Caco-2 (cell line): ENCODE measurements at regions of chr2 and their contacts with region 1.

Region 1: GRCh38 chr2:188291617-188292347 is at the start of gene GULP1:
- DNase-seq: peak; percentile 82 to 85
- H3K4me3 ChIP-seq: peak within 1 kb of the TSS; percentile 92
- H3K4me3 Mint-ChIP-seq: peak within 1 kb of the TSS; percentile 94
- H3K27ac Mint-ChIP-seq: peak within 1 kb of the TSS; percentile 89
- H3K4me1 ChIP-seq: peaks cover 17% of the 10 kb centered on the region
- H3K4me1 Mint-ChIP-seq: no peaks in the 10 kb centered on the region
- H3K27me3 ChIP-seq: no peaks in the 10 kb centered on the region
- H3K27me3 Mint-ChIP-seq: no peaks in the 10 kb centered on the region
- CTCF ChIP-seq: peak; percentile 75 to 90
- total RNA-seq, gene GULP1: 32.4 and 33.0 TPM in 2 replicates

Region 2: GRCh38 chr2:188303363-188304031 is 11.7 kb after region 1 on chr2:
- CTCF ChIA-PET with region 1: interaction called, 6 read pairs
- POLR2A ChIA-PET with region 1: interaction called, 5 read pairs
- intact Hi-C with region 1: loop called (anchors 1 kb)
- DNase-seq: peak; percentile 60 to 61
- H3K4me3 ChIP-seq: no peak overlapping the region
- H3K4me3 Mint-ChIP-seq: peak overlapping the region; percentile 22
- H3K27ac Mint-ChIP-seq: peak overlapping the region; percentile 41
- H3K4me1 ChIP-seq: peaks cover 31% of the 10 kb centered on the region
- H3K4me1 Mint-ChIP-seq: peaks cover 38% of the 10 kb centered on the region
- H3K27me3 ChIP-seq: no peaks in the 10 kb centered on the region
- H3K27me3 Mint-ChIP-seq: no peaks in the 10 kb centered on the region
- CTCF ChIP-seq: no peak

Region 3: DNA sequence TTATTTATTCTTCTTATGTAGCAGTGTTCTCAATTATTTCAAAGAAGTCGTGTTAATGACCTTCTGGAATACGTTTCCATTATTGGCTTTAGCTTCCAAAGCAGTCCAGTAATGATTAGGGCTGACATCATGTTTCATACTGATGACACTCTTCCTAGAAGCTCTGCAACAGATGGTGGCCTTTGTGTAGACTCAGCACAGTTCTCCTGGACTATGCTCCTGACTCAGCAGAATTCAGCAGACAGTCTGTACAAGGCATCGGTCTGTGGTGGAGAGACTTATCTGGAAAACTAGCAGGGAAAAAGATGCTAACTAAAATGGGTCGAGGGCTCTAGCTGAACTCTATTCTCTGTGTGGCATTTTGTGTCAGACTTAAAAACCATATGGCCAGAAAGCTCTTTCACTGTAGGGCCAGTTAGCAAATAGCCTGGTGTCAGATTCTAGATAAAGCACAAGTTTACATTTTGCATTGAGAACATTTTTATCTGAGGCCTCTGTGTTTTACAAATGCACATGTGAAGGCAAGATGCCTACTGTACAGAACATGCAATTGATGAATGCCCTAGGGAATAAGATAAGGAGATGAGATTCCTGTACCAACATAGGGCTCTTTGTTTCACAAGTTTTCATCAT is 35.0 kb after region 1 on chr2:
- CTCF ChIA-PET with region 1: interaction called, 3 read pairs
- POLR2A ChIA-PET with region 1: interaction called, 5 read pairs
- intact Hi-C with region 1: loop called (anchors 2 kb)
- DNase-seq: peak in 1 of 2 experiments; percentile 38
- H3K4me3 ChIP-seq: no peak overlapping the region
- H3K4me3 Mint-ChIP-seq: no peak overlapping the region
- H3K27ac Mint-ChIP-seq: no peak overlapping the region
- H3K4me1 ChIP-seq: peaks cover 8% of the 10 kb centered on the region; the same call in 1 of the 2 replicates
- H3K4me1 Mint-ChIP-seq: peaks cover 18% of the 10 kb centered on the region
- H3K27me3 ChIP-seq: no peaks in the 10 kb centered on the region
- H3K27me3 Mint-ChIP-seq: no peaks in the 10 kb centered on the region
- CTCF ChIP-seq: no peak

Region 4: GRCh38 chr2:188363983-188364630 is 72.3 kb after region 1 on chr2:
- CTCF ChIA-PET with region 1: interaction called, 37 read pairs
- POLR2A ChIA-PET with region 1: no interaction called
- intact Hi-C with region 1: loop called (anchors 1 kb)
- DNase-seq: peak; percentile 45 to 49
- H3K4me3 ChIP-seq: no peak overlapping the region
- H3K4me3 Mint-ChIP-seq: no peak overlapping the region
- H3K27ac Mint-ChIP-seq: no peak overlapping the region
- H3K4me1 ChIP-seq: no peaks in the 10 kb centered on the region; the same call in none of the 2 replicates
- H3K4me1 Mint-ChIP-seq: peaks cover 14% of the 10 kb centered on the region
- H3K27me3 ChIP-seq: no peaks in the 10 kb centered on the region
- H3K27me3 Mint-ChIP-seq: no peaks in the 10 kb centered on the region
- CTCF ChIP-seq: no peak

Region 5: GRCh38 chr2:188456114-188456911 is 164.5 kb after region 1 on chr2:
- CTCF ChIA-PET with region 1: no interaction called
- POLR2A ChIA-PET with region 1: no interaction called
- intact Hi-C with region 1: loop called (anchors 5 kb)
- DNase-seq: no peak
- H3K4me3 ChIP-seq: no peak overlapping the region
- H3K4me3 Mint-ChIP-seq: no peak overlapping the region
- H3K27ac Mint-ChIP-seq: no peak overlapping the region
- H3K4me1 ChIP-seq: peaks cover 16% of the 10 kb centered on the region; the same call in 1 of the 2 replicates
- H3K4me1 Mint-ChIP-seq: no peaks in the 10 kb centered on the region
- H3K27me3 ChIP-seq: no peaks in the 10 kb centered on the region
- H3K27me3 Mint-ChIP-seq: no peaks in the 10 kb centered on the region
- CTCF ChIP-seq: peak in 1 of 2 experiments; percentile 17